ENCODE measurements at regions of chr5 and their contacts with region 1.

Region 1: DNA sequence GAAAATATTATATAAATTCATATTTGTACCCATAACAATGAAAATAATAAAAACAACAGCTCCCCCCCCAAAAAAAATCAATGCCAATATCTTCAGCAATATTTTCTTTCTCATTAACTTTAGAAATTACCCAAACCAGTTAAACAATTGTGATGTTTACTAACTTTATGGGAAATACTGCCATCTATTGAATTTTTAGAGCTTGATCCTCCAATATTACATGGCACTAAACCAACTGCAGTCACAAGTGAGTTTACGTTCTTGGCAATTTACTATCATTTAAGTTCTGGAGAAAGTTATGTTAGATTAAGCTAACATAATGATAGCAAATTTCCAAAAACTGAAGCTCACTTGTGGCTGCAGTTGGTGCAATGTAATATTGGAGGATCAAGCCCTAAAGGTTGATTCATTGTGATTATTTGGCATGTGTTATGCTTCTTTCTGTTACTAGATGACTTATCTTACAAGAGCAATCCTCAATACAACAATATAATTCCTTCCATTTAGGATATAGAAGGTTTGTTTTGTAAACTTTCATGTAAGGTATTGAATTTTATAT is 379.5 kb downstream of the CDH18 start:
- DNase-seq: no peak
- H3K4me3 Mint-ChIP-seq: no peak overlapping the region
- H3K27ac Mint-ChIP-seq: no peak overlapping the region
- H3K4me1 Mint-ChIP-seq: no peaks in the 10 kb centered on the region
- H3K27me3 Mint-ChIP-seq: no peaks in the 10 kb centered on the region

Region 2: DNA sequence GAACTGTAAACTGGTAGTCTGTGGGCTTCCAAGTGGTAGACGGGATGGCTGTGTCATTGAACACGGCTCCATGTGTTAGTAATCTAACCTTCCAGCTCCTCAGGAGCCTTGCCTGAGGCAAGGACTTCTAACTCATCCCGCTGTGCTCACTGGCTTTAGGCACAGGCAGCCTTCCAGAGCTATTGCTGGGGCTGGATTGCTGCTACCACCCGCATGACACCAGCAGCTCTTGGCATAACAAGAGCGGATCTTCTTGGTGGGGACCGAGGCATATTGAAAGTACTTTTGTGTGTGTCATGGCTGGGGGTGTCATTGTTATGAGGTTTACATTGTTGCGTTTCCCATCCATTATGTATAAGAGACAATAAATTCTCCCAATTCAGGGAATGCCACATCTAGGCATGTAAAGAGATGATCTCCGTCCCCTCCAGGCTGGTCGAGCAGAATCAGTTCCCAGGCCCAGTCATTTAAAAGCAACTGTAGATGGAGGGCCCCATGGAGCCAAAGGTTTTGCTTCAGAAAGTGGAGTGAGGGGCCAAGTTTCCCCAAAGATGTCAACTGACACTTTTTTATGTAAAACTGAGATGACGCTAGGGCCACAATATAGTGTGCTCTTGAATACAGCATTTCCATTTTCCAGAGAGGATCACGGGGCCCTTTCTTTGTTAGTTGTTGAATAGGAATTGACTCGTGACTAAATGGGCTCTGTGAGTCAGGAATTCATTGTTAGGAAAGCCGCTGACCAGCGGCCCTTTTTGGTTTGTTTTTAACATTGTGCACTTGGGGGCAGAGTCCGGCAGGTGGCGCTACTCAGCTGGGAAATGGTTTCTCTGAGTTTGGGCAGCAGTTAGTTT is 1214.7 kb before region 1 on chr5:
- CTCF ChIA-PET with region 1: no interaction called
- intact Hi-C with region 1: loop called (anchors 5 kb)
- DNase-seq: peak; percentile 59
- H3K4me3 Mint-ChIP-seq: no peak overlapping the region
- H3K27ac Mint-ChIP-seq: no peak overlapping the region
- H3K4me1 Mint-ChIP-seq: no peaks in the 10 kb centered on the region
- H3K27me3 Mint-ChIP-seq: no peaks in the 10 kb centered on the region

Region 3: DNA sequence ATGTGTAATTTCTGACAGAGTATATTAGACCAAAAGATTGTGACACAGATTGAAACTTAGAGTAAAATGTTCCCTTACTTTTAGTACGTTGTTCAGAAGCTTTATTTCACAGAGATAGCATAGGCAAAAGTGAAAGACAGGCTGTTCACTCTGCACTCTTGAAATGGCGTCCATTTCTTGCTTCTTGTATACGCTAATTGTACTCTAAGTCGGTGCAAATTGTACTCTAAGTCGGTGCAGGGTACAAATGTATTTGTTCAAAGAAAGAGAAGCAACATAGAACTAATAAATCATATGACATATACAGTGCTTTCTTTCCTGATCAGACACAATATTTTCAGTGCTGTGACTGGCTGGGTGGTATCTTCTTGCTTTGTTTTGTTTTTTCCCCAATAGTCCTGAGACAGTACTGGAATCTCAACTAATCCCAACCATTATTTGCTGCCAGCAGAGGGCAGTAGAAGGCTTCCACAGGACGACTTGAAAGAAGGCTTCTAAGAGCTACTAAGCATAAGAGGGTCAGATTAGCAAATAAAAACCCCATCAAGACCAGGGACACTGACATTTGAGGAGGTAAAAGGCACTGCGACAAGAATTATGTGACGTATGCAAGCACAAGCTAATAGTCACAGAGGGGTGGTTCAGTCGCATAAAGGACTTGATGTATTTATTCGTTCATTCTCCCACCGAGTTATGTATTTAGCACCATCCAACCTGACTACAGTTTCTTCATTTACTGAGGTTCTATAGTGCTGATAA is 1142.5 kb before region 1 on chr5:
- CTCF ChIA-PET with region 1: no interaction called
- intact Hi-C with region 1: loop called (anchors 2 kb)
- DNase-seq: peak; percentile 61
- H3K4me3 Mint-ChIP-seq: no peak overlapping the region
- H3K27ac Mint-ChIP-seq: no peak overlapping the region
- H3K4me1 Mint-ChIP-seq: no peaks in the 10 kb centered on the region
- H3K27me3 Mint-ChIP-seq: no peaks in the 10 kb centered on the region

Region 4: DNA sequence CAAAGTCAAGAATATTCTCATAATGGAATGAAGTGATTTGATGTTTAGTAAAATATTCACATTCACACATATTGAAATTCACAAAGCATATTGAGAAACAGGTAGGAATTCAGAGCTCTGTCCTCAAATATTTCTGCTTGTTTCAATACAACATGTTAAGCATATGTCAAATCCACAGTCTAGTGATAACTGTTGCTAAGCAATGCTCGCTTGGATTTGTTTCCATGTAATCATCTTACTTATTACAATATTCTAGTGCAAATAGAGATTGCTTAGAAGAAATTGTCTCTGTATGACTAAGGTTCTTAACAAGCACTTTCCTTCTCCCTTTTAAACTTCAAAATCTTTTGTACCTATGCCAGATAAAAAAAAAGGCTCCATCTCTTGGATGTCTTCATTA is 616.3 kb before region 1 on chr5:
- CTCF ChIA-PET with region 1: no interaction called
- intact Hi-C with region 1: no loop called
- DNase-seq: no peak
- H3K4me3 Mint-ChIP-seq: no peak overlapping the region
- H3K27ac Mint-ChIP-seq: no peak overlapping the region
- H3K4me1 Mint-ChIP-seq: no peaks in the 10 kb centered on the region
- H3K27me3 Mint-ChIP-seq: no peaks in the 10 kb centered on the region

Region 5: GRCh38 chr5:19270153-19270818 is 338.2 kb before region 1 on chr5:
- CTCF ChIA-PET with region 1: no interaction called
- intact Hi-C with region 1: no loop called
- DNase-seq: no peak
- H3K4me3 Mint-ChIP-seq: no peak overlapping the region
- H3K27ac Mint-ChIP-seq: no peak overlapping the region
- H3K4me1 Mint-ChIP-seq: no peaks in the 10 kb centered on the region
- H3K27me3 Mint-ChIP-seq: no peaks in the 10 kb centered on the region

Measured in activated naive CD4-positive, alpha-beta T cell treated with anti-CD3 and anti-CD28 coated beads for 36 hours (primary cell).